ENCODE measurements at regions of chr10 and their contacts with region 1.

Region 1: GRCh38 chr10:129466703-129467358 is at the start of gene MGMT:
- DNase-seq: peak; percentile 98
- H3K4me3 Mint-ChIP-seq: peak within 1 kb of the TSS; percentile 83
- H3K27ac Mint-ChIP-seq: peak within 1 kb of the TSS; percentile 79
- H3K4me1 Mint-ChIP-seq: peaks cover 5% of the 10 kb centered on the region
- H3K27me3 Mint-ChIP-seq: peaks cover 3% of the 10 kb centered on the region
- total RNA-seq, gene MGMT: 19.5 and 19.6 TPM in 2 replicates

Region 2: GRCh38 chr10:129030996-129031843 is 435.6 kb before region 1 on chr10:
- intact Hi-C with region 1: loop called (anchors 5 kb)
- DNase-seq: peak; percentile 87
- H3K4me3 Mint-ChIP-seq: no peak overlapping the region
- H3K27ac Mint-ChIP-seq: no peak overlapping the region
- H3K4me1 Mint-ChIP-seq: peaks cover 24% of the 10 kb centered on the region
- H3K27me3 Mint-ChIP-seq: peaks cover 29% of the 10 kb centered on the region

Region 3: DNA sequence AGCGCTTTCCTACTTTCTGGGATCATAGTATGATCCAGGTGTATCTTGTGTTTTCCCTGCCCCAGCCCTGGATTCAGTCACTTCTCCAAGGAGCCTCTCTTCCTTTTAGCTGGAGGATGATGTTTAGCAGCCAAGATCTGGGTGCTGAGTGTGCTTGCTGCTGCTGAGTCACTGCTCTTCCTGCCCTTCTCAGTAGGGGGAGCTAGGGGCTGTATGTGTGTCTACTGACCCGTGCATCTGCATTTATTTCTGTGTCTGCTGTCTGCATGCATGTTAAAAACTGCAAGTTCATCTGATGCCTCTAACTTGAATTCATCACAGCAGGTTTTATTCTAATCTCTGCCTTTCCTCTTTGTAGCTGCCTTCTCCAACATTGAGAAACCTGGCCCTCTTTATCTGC is 31.8 kb after region 1 on chr10:
- intact Hi-C with region 1: loop called (anchors 1 kb)
- DNase-seq: no peak
- H3K4me3 Mint-ChIP-seq: no peak overlapping the region
- H3K27ac Mint-ChIP-seq: peak overlapping the region; percentile 58
- H3K4me1 Mint-ChIP-seq: peaks cover 4% of the 10 kb centered on the region
- H3K27me3 Mint-ChIP-seq: no peaks in the 10 kb centered on the region

Region 4: DNA sequence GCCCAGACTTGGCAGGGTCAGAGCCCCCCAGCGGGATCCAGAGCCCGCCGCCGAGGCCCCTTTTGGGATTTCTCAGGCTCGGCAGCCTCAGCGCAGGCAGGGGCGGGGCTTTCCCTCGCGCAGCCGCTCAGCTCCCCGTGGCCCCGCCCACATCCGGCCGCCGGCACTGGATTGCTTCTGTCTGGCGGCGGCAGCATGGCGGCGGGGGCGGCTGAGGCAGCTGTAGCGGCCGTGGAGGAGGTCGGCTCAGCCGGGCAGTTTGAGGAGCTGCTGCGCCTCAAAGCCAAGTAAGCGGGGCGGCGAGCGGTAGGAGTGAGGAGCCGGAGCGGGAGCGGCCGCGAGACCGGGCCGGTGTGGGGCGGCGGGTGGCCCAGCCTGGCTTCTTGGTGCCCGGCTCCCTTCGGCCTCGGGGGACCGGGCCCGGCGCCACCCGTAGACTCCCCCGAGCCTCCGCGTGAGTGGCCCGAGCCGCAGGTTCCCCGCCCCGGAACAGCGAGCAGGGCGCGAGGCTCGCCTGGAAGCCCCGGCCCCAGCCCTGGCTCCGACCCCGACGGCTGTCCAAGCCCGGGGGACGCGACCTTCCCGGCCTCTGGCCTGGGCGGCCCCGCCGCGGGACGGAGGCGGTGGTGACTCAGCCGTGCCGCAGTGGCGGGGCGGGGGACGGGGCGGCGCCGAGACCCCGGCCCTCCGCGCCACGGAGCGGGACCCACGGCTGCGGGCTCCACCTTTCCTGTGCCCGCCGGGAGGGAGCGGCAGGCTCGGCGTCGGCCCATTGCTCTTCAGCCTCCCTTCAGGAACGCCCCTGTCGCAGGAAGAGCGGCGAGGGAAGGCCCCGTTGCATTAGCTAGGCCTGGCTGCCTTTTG is 669.6 kb after region 1 on chr10 and contains the start of gene GLRX3:
- intact Hi-C with region 1: loop called (anchors 2 kb)
- DNase-seq: peak; percentile 97
- H3K4me3 Mint-ChIP-seq: peak within 1 kb of the TSS; percentile 94
- H3K27ac Mint-ChIP-seq: peak within 1 kb of the TSS; percentile 95
- H3K4me1 Mint-ChIP-seq: peaks cover 36% of the 10 kb centered on the region
- H3K27me3 Mint-ChIP-seq: peaks cover 14% of the 10 kb centered on the region
- total RNA-seq, gene GLRX3: 136 and 149 TPM in 2 replicates

Measured in activated CD4-positive, alpha-beta T cell treated with anti-CD3 and anti-CD28 coated beads, Interleukin-2, amount 10 ng/mL, durations not matched to agents 24 days and 14 days (primary cell).